ENCODE measurements at regions of chr1 and their contacts with region 1.

Region 1: DNA sequence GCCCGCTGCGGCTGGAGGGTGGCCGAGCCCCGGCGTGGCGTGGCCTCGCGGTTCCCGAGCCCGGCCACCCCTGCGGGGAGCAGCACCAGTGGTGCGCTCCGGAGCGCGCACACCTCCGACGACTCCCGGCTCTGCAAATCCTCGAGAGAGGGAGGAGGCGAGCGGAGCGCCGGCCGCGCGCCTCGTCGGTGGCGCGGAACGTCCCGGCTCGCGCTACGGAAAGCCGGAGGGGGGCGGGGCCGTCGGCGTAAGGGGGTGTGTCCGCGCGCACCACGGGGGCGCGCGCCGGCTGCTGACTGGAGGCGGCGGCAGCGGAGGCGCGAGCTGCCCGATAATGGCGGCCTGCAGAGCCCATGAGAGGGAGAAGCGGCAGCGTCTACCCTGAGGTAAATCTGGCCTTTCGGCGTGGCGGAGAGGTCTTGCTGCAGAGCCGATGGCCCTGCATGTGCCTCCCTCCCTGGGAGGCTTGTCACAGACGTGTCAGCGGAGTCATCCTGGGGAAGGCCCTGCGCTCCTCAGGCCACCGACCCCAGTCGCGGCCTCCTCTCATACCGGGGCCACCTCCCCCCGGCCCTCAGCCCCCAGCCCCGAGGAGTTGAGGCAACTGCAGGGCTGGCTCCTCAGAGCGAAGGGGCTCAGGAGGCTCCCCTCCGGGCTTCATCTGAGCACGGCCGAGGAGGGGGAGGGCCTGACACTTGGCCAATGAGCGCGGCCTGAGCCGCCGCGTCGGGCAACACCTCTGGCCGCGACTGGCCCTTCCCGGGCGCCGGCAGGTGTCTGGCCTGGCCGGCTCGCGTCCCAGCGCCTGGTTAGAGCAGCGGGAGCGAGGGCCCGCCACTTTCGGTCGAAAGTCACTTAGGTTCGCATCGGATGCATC is at the start of gene PDIK1L:
- DNase-seq: peak; percentile 97
- ATAC-seq: peak; percentile 85
- H3K4me3 Mint-ChIP-seq: peak within 1 kb of the TSS; percentile 96
- H3K27ac Mint-ChIP-seq: peak within 1 kb of the TSS; percentile 91
- H3K4me1 Mint-ChIP-seq: peaks cover 27% of the 10 kb centered on the region
- H3K27me3 Mint-ChIP-seq: no peaks in the 10 kb centered on the region
- total RNA-seq, gene PDIK1L: 12.3 to 13.0 TPM

Region 2: DNA sequence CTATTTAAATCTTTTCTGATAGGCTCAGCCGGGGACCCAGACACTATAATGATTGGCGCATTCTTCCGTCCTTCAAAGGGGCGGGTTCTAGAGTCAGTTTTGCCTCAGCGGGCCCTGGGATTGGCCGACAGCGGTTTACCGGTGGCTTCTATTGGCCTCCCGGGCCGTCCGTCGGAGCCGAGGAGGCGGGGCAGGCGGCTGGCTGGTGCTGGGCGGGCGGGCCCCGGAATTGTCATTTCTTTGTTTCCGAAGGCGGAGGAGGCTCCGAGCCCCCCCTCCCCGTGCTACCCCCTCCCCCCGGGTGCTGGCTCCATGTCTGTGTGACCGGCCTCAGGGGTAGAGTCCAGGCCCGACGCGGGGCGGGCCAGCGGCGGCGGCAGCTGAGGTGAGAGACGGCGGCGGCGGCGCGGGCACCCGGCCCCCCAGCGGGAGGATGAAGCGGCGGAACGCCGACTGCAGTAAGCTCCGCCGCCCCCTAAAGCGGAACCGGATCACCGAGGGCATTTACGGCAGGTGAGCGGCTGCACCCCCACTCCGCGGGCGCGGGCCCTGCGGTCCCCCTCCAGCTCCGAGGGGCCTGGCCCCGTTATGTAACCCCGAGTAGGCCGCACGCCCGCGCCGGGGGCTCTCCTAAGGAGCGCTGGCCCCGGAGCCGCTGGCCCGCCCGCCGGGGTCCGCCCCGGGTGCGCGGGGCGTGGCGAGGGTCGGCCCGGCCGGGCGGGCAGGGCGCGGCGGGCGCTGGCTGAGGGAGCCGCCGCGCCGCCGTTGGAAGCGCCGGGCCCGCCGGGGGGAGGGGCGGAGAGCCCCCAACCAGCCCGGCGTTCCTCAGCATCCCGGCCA is 680.9 kb before region 1 on chr1 and contains the start of gene MACO1:
- CTCF ChIA-PET with region 1: no interaction called
- POLR2A ChIA-PET with region 1: no interaction called
- intact Hi-C with region 1: loop called in 1 of 2 experiments (anchors 1 kb)
- DNase-seq: peak; percentile 98
- ATAC-seq: peak; percentile 93
- H3K4me3 Mint-ChIP-seq: peak within 1 kb of the TSS; percentile 93
- H3K27ac Mint-ChIP-seq: peak within 1 kb of the TSS; percentile 99
- H3K4me1 Mint-ChIP-seq: peaks cover 47% of the 10 kb centered on the region
- H3K27me3 Mint-ChIP-seq: no peaks in the 10 kb centered on the region
- total RNA-seq, gene MACO1: 15.7 to 18.5 TPM

Region 3: DNA sequence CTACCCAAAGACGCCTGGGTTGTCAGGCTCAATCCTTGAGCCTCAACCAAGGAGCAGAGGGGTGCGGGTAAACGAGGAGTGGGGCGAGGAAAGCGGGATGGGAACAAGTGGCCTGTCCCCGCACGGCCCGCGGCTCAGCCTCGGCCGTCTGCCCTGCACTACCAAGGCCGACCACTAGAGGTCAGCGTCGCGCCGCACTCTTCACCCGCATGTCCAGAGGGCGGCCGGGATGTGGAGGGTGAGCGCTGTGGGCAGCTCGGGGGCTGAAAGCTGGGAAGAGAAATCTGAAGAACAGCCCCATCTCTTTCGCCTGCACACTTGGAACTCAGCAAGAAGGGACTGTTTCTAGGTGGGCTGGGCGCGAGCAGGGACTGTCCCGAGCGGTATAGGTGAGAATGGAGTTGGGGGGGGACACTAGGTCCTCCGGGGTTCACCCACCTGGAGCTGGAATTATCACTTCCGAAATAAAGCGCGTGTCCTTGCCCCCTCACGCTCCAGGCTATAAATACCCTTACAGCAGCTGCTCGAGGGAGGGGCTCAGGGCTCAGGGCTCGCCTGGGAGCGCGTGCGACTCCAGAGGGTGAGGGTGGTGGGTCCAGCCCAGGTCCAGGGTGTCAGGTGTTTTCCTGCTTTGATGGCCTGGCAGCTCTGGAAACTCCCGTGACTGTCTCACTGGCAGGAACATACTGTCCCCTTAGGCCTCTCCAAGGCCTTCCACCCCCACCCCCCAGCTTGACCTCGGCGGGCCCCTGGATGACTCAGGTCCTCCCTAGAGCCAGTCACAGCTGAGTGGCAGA is 75.6 kb before region 1 on chr1:
- CTCF ChIA-PET with region 1: interaction called, 4 read pairs
- POLR2A ChIA-PET with region 1: no interaction called
- intact Hi-C with region 1: loop called in 1 of 2 experiments (anchors 1 kb)
- DNase-seq: peak; percentile 86
- ATAC-seq: peak; percentile 76
- H3K4me3 Mint-ChIP-seq: peak overlapping the region; percentile 80
- H3K27ac Mint-ChIP-seq: peak overlapping the region; percentile 78
- H3K4me1 Mint-ChIP-seq: peaks cover 13% of the 10 kb centered on the region
- H3K27me3 Mint-ChIP-seq: peaks cover 6% of the 10 kb centered on the region

Region 4: DNA sequence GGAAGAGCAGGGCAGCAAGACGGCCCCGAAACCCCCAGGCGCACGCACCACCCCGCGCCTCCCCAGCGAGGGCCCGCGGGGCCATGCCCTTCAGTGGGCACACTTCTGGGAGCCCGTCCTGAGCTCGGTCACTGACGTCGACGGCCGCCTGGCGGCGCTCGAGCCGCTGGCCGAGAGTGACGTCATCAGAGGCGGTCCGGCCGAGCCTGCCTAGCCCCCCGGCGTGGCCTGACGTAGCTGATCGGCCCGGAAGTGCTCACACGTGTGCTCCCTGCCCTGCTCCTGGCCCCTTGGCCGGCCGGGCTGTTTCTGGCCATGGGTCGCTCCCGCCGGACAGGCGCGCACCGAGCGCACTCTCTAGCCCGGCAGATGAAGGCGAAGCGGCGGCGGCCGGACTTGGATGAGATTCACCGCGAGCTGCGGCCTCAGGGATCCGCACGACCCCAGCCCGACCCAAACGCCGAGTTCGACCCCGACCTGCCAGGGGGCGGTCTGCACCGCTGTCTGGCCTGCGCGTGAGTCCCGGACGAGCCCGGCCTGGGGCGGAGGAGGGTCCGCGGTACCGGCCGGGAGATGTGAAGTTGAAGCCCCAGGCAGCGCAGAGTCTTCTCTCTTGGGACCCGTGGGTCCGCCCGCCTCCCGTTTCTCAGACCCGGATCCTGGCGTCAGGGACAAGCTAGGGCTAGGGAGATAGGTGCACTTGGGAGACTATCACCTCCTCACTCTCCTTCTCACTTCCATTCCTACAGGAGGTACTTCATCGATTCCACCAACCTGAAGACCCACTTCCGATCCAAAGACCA is 58.1 kb after region 1 on chr1 and contains the start of gene ZNF593:
- CTCF ChIA-PET with region 1: interaction called, 5 read pairs
- POLR2A ChIA-PET with region 1: no interaction called
- intact Hi-C with region 1: loop called in 1 of 2 experiments (anchors 1 kb)
- DNase-seq: peak; percentile 94
- ATAC-seq: peak; percentile 96
- H3K4me3 Mint-ChIP-seq: peak within 1 kb of the TSS; percentile 95
- H3K27ac Mint-ChIP-seq: peak within 1 kb of the TSS; percentile 88
- H3K4me1 Mint-ChIP-seq: peaks cover 10% of the 10 kb centered on the region
- H3K27me3 Mint-ChIP-seq: no peaks in the 10 kb centered on the region
- total RNA-seq, gene ZNF593: 44.6 to 56.3 TPM

Region 5: GRCh38 chr1:26284597-26285360 is 173.0 kb after region 1 on chr1:
- CTCF ChIA-PET with region 1: no interaction called
- POLR2A ChIA-PET with region 1: no interaction called
- intact Hi-C with region 1: loop called in 1 of 2 experiments (anchors 1 kb)
- DNase-seq: peak; percentile 99
- ATAC-seq: peak; percentile 66
- H3K4me3 Mint-ChIP-seq: peak overlapping the region; percentile 61
- H3K27ac Mint-ChIP-seq: peak overlapping the region; percentile 99
- H3K4me1 Mint-ChIP-seq: peaks cover 87% of the 10 kb centered on the region
- H3K27me3 Mint-ChIP-seq: no peaks in the 10 kb centered on the region

Region 6: GRCh38 chr1:26472901-26473845 is 361.4 kb after region 1 on chr1:
- CTCF ChIA-PET with region 1: no interaction called
- POLR2A ChIA-PET with region 1: no interaction called
- intact Hi-C with region 1: loop called in 1 of 2 experiments (anchors 1 kb)
- DNase-seq: peak; percentile 97
- ATAC-seq: peak; percentile 62
- H3K4me3 Mint-ChIP-seq: peak overlapping the region; percentile 91
- H3K27ac Mint-ChIP-seq: peak overlapping the region; percentile 43
- H3K4me1 Mint-ChIP-seq: peaks cover 50% of the 10 kb centered on the region
- H3K27me3 Mint-ChIP-seq: no peaks in the 10 kb centered on the region

Measured in activated CD4-positive, alpha-beta T cell treated with anti-CD3 and anti-CD28 coated beads for 36 hours (primary cell).